Prostate gland (tissue), 2 donors: ENCODE measurements at regions of chrX and their contacts with region 1.

Region 1: DNA sequence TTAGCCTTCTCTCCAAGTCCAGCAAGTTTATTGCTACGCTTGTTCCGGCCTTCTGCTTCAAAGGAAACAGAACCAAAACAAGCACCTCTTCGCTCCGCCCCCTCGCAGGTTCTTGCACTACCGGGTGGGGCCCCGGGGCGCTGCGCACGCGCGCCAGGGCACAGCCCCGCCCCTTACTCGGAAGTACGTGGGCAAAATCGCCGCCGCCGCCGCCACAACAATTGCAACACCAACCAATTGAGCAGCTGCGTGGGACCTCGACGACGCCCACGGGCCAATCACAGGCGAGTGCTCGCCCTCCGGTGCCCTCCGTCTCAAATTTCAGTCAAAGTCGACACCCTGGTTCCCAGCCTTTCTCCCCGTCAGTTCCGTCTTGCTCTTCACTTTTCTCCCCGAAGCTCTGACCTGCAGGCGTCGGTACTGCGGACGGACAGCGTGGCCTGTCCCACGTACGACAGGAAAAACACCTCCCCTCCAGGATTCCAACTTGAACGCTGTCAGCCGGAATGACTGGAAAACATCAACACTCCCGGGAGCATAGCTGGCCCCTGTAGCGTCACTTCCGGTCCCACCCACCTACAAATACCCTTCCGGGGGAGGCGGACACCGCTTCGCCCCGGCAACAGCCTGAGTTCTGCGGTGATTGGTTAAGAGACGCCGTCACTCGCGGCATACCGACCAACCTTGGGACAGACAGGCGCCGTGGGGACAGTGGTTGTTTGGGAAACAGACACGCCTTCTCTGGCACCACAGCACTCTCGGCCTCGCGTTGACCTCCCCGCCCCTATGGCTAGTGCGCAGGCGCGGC is 624 bp upstream of the OTUD5 start:
- DNase-seq: peak; percentile 96
- H3K4me3 ChIP-seq: peak overlapping the region; percentile 52 to 53
- H3K27ac ChIP-seq: peak overlapping the region; percentile 93 to 95
- H3K4me1 ChIP-seq: no peaks in the 10 kb centered on the region
- H3K27me3 ChIP-seq: no peaks in the 10 kb centered on the region
- CTCF ChIP-seq: peak in 1 of 4 experiments; percentile 11
- POLR2A ChIP-seq: peak; percentile 47

Region 2: GRCh38 chrX:48897621-48898306 is 60.3 kb before region 1 on chrX and contains the starts of genes PQBP1 and TIMM17B:
- intact Hi-C with region 1: loop called (anchors 5 kb)
- DNase-seq: peak; percentile 89
- H3K4me3 ChIP-seq: peak within 1 kb of the TSS; percentile 54 to 57
- H3K27ac ChIP-seq: peak within 1 kb of the TSS; percentile 95
- H3K4me1 ChIP-seq: no peaks in the 10 kb centered on the region
- H3K27me3 ChIP-seq: no peaks in the 10 kb centered on the region
- CTCF ChIP-seq: no peak
- POLR2A ChIP-seq: peak; percentile 72
- total RNA-seq, gene PQBP1: 37.1 to 76.6 TPM
- total RNA-seq, gene TIMM17B: 58.2 to 85.8 TPM

Region 3: GRCh38 chrX:49247916-49248811 is 290.1 kb after region 1 on chrX:
- intact Hi-C with region 1: no loop called
- DNase-seq: no peak
- H3K4me3 ChIP-seq: no peak overlapping the region
- H3K27ac ChIP-seq: no peak overlapping the region
- H3K4me1 ChIP-seq: no peaks in the 10 kb centered on the region
- H3K27me3 ChIP-seq: no peaks in the 10 kb centered on the region
- CTCF ChIP-seq: no peak
- POLR2A ChIP-seq: no peak